ENCODE measurements at regions of chr9 and their contacts with region 1.

Region 1: GRCh38 chr9:78035383-78035993 is 3.9 kb upstream of the GNAQ start:
- DNase-seq: peak; percentile 84
- ATAC-seq: no peak; the same call in 1 of the 2 replicates
- H3K4me3 ChIP-seq: no peak overlapping the region
- H3K27ac ChIP-seq: no peak overlapping the region
- H3K4me1 ChIP-seq: no peaks in the 10 kb centered on the region
- H3K27me3 ChIP-seq: no peaks in the 10 kb centered on the region
- CTCF ChIP-seq: peak; percentile 90
- POLR2A ChIP-seq: peak; percentile 31; the same call in 1 of the 2 replicates
- RAD21 ChIP-seq: peak; percentile 93

Region 2: GRCh38 chr9:77177161-77177893 is 858.2 kb before region 1 on chr9 and contains the start of gene VPS13A:
- CTCF ChIA-PET with region 1: no interaction called
- POLR2A ChIA-PET with region 1: no interaction called
- dilution Hi-C with region 1: no loop called
- in situ Hi-C with region 1: loop called (anchors 10 kb)
- intact Hi-C with region 1: loop called (anchors 5 kb)
- DNase-seq: peak; percentile 91
- ATAC-seq: peak; percentile 92
- H3K4me3 ChIP-seq: peak within 1 kb of the TSS; percentile 80
- H3K27ac ChIP-seq: peak within 1 kb of the TSS; percentile 43
- H3K4me1 ChIP-seq: 0 out of 2 replicates have a peak, but pooled peaks cover 1% of the 10 kb centered on the region
- H3K27me3 ChIP-seq: no peaks in the 10 kb centered on the region
- CTCF ChIP-seq: peak; percentile 34
- POLR2A ChIP-seq: no peak
- RAD21 ChIP-seq: no peak
- total RNA-seq, gene VPS13A: 26.5 and 46.9 TPM in 2 replicates

Region 3: GRCh38 chr9:77433675-77434445 is 601.6 kb before region 1 on chr9:
- CTCF ChIA-PET with region 1: interaction called, 7 read pairs
- POLR2A ChIA-PET with region 1: no interaction called
- dilution Hi-C with region 1: no loop called
- in situ Hi-C with region 1: loop called (anchors 10 kb)
- intact Hi-C with region 1: loop called (anchors 1 kb)
- DNase-seq: peak; percentile 74
- ATAC-seq: peak; percentile 97
- H3K4me3 ChIP-seq: no peak overlapping the region
- H3K27ac ChIP-seq: no peak overlapping the region
- H3K4me1 ChIP-seq: no peaks in the 10 kb centered on the region
- H3K27me3 ChIP-seq: no peaks in the 10 kb centered on the region
- CTCF ChIP-seq: peak; percentile 99
- POLR2A ChIP-seq: peak; percentile 48; the same call in 1 of the 2 replicates
- RAD21 ChIP-seq: peak; percentile 99

Region 4: GRCh38 chr9:77588271-77588937 is 447.1 kb before region 1 on chr9:
- CTCF ChIA-PET with region 1: no interaction called
- POLR2A ChIA-PET with region 1: no interaction called
- dilution Hi-C with region 1: no loop called
- in situ Hi-C with region 1: no loop called
- intact Hi-C with region 1: loop called (anchors 10 kb)
- DNase-seq: peak; percentile 89
- ATAC-seq: peak; percentile 93
- H3K4me3 ChIP-seq: no peak overlapping the region
- H3K27ac ChIP-seq: no peak overlapping the region
- H3K4me1 ChIP-seq: no peaks in the 10 kb centered on the region
- H3K27me3 ChIP-seq: peaks cover 2% of the 10 kb centered on the region; the same call in 1 of the 2 replicates
- CTCF ChIP-seq: no peak
- POLR2A ChIP-seq: no peak
- RAD21 ChIP-seq: no peak

Region 5: GRCh38 chr9:77751341-77752091 is 284.0 kb before region 1 on chr9:
- CTCF ChIA-PET with region 1: interaction called, 3 read pairs
- POLR2A ChIA-PET with region 1: no interaction called
- dilution Hi-C with region 1: no loop called
- in situ Hi-C with region 1: no loop called
- intact Hi-C with region 1: loop called (anchors 1 kb)
- DNase-seq: peak; percentile 81
- ATAC-seq: peak; percentile 69
- H3K4me3 ChIP-seq: no peak overlapping the region
- H3K27ac ChIP-seq: no peak overlapping the region
- H3K4me1 ChIP-seq: peaks cover 5% of the 10 kb centered on the region; the same call in 1 of the 2 replicates
- H3K27me3 ChIP-seq: no peaks in the 10 kb centered on the region
- CTCF ChIP-seq: peak; percentile 75
- POLR2A ChIP-seq: no peak
- RAD21 ChIP-seq: peak; percentile 81

Region 6: DNA sequence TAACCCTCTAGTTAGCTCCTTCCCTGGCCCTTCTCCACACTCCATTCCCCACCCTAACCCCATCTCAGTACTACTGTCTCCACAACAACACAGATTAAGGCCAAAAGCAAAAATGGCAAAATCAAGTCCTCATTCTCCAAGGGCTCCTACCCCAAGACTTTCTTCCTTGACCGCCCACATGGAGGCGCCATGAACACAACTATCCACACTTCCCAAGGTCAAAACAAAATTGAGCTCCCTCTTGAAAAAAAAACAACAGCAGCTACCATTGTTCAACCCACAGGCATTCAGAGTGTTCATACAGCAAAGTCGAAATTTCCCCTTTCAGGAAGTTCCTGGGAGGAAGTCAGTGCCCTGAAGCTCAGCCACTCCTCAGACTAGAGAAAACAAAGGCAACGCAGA is 58.3 kb before region 1 on chr9:
- CTCF ChIA-PET with region 1: interaction called, 17 read pairs
- POLR2A ChIA-PET with region 1: no interaction called
- dilution Hi-C with region 1: no loop called
- in situ Hi-C with region 1: no loop called
- intact Hi-C with region 1: loop called (anchors 1 kb)
- DNase-seq: peak; percentile 73
- ATAC-seq: peak; percentile 62
- H3K4me3 ChIP-seq: no peak overlapping the region
- H3K27ac ChIP-seq: no peak overlapping the region
- H3K4me1 ChIP-seq: peaks cover 10% of the 10 kb centered on the region
- H3K27me3 ChIP-seq: no peaks in the 10 kb centered on the region
- CTCF ChIP-seq: peak; percentile 64
- POLR2A ChIP-seq: no peak
- RAD21 ChIP-seq: peak; percentile 75

Region 7: DNA sequence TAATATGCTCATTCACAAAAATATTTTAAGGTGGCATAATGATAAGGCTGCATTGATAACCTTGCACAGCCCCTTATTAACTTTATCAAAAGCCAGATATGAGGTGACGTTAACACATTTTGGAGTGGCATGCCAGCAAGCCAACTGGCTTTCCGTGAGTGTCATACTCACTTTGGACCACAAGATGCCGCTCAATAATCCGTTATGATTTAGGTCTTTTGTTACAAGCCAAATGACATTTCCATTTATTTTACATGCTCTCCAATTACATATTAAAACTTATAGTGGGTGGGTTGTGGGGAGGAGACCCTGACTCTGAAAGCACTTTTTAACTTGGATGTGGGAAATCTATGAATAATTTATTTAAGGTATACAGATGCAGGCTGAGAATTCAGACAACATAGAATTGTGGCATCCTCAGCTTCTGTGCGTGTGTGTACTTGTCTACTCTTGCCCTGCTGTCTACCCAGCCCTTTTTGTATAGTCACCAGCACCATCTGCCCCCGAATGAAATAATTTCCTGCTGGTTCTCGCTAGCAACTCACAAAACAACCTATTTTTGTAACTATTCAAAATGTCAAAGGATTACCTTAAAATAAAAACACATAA is 566.6 kb after region 1 on chr9:
- CTCF ChIA-PET with region 1: no interaction called
- POLR2A ChIA-PET with region 1: no interaction called
- dilution Hi-C with region 1: no loop called
- in situ Hi-C with region 1: no loop called
- intact Hi-C with region 1: no loop called
- DNase-seq: peak; percentile 66
- ATAC-seq: peak; percentile 81
- H3K4me3 ChIP-seq: no peak overlapping the region
- H3K27ac ChIP-seq: no peak overlapping the region
- H3K4me1 ChIP-seq: peaks cover 6% of the 10 kb centered on the region
- H3K27me3 ChIP-seq: no peaks in the 10 kb centered on the region
- CTCF ChIP-seq: peak; percentile 79
- POLR2A ChIP-seq: no peak
- RAD21 ChIP-seq: peak; percentile 86